Right ventricle myocardium inferior (tissue), 1 donor: ENCODE measurements at regions of chr7 and their contacts with region 1.

Region 1: DNA sequence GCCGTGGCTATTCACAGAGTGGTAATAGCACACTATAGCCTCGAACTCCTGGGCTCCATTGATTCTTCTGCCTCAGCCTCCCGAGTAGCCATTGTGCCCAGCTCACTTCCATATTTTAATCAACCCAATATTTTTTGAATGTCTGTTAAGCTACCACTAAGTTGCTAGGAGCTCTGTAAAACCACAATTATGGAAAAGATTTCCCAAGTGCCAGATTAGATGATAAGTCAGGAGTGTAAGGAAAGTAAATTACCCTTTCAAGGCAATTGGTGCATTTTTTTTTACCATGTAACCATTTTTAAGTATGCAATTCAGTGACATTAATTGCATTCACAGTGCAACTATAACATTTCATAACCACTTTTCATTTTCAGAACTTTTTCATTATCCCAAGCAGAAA is 87.5 kb upstream of the GATAD1 start:
- DNase-seq: no peak
- ATAC-seq: no peak

Region 2: GRCh38 chr7:92115821-92116220 is 244.0 kb before region 1 on chr7:
- intact Hi-C with region 1: no loop called
- DNase-seq: no peak
- ATAC-seq: no peak

Region 3: DNA sequence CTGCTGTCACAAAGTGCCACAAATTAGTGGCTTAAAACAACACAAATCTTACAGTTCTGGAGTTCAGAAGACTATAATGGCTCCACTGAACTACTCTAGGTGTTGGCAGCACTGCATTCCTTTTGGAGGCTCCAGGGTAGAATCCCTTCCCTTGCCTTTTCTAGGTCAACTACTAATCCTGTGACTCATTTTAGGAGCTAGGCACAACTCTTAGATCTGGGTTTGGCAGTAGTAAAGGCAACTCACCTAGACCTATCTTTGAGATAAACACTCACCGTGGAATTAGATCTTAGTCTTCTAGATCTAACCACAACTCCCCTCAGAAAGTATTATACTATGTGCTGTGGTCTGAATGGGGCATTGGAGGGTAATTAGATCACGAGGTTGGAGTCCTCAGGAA is 53.6 kb before region 1 on chr7:
- intact Hi-C with region 1: loop called (anchors 10 kb)
- DNase-seq: no peak
- ATAC-seq: no peak

Region 4: GRCh38 chr7:92557249-92557648 is 197.4 kb after region 1 on chr7:
- intact Hi-C with region 1: no loop called
- DNase-seq: no peak
- ATAC-seq: peak; percentile 23